Gastrocnemius medialis (tissue), 4 donors: ENCODE measurements at regions of chr21 and their contacts with region 1.

Region 1: GRCh38 chr21:38897532-38898422 is 92.0 kb downstream of the ETS2 start:
- DNase-seq: peak; percentile 47 to 64
- ATAC-seq: peak; percentile 79 to 89
- H3K4me3 ChIP-seq: peak overlapping the region in 1 of 4 donors; percentile 2
- H3K27ac ChIP-seq: peak overlapping the region; percentile 89 to 95 (median 92)
- H3K4me1 ChIP-seq: peaks cover 31 to 33% of the 10 kb centered on the region in 2 donors
- H3K27me3 ChIP-seq: no peaks in the 10 kb centered on the region
- CTCF ChIP-seq: no peak
- POLR2A ChIP-seq: peak; percentile 41 to 68

Region 2: GRCh38 chr21:38853421-38853919 is 44.3 kb before region 1 on chr21:
- in situ Hi-C with region 1: no loop called
- intact Hi-C with region 1: loop called (anchors 1 kb)
- DNase-seq: peak; percentile 96 to 99
- ATAC-seq: peak; percentile 87 to 88
- H3K4me3 ChIP-seq: no peak overlapping the region
- H3K27ac ChIP-seq: peak overlapping the region; percentile 86 to 88 (median 86)
- H3K4me1 ChIP-seq: peaks cover 22 to 43% of the 10 kb centered on the region in 2 donors
- H3K27me3 ChIP-seq: no peaks in the 10 kb centered on the region
- CTCF ChIP-seq: no peak
- POLR2A ChIP-seq: peak in 1 of 2 donors; percentile 19

Region 3: DNA sequence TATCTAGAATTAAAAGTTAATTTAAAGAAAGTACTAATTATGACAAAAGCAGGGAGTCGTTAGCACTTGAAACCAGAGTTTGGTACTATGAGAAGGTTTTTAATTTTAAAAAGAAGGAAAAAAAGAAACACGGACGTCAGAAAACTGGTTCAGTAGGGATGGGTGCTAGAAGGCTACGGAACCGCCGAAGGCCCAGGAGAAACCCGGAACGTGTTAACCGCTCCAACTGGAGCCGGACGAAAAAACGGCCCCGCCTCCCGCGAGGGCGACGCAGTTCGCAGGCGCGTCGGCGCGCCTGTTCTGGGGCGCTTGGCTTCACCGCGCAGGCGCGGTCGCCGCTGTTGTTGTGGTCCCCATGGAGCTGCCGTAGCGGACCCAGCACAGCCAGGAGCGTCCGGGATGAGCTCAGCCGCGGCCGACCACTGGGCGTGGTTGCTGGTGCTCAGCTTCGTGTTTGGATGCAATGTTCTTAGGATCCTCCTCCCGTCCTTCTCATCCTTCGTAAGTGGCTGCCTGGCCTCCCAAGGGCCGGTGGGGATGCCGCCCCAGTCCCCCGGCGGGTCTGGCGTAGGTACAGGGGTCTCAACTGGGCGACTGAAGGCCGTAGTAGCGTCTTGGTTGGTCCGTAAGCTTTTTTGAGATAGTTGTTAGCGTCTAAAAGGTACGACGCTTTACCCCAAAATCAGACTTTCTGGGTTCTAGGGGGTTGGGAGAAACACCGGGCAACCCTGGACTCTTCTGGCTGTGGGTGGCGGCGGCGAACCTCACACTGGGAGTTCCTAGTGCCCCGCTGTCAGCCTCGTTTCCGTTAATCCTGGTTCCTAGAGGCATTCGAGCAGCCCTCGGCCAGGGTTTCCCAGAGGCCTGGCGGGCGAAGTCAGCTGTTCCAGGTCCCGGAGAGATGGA is 482.5 kb after region 1 on chr21:
- in situ Hi-C with region 1: no loop called
- intact Hi-C with region 1: no loop called
- DNase-seq: peak; percentile 86 to 94
- ATAC-seq: peak; percentile 93 to 95
- H3K4me3 ChIP-seq: peak overlapping the region; percentile 64 to 90 (median 78)
- H3K27ac ChIP-seq: peak overlapping the region; percentile 82 to 91 (median 86)
- H3K4me1 ChIP-seq: peaks cover 9 to 13% of the 10 kb centered on the region in 2 donors
- H3K27me3 ChIP-seq: no peaks in the 10 kb centered on the region
- CTCF ChIP-seq: no peak
- POLR2A ChIP-seq: peak; percentile 51 to 64